Activated CD4-positive, alpha-beta memory T cell treated with anti-CD3 and anti-CD28 coated beads, Interleukin-2, amount 10 ng/mL, durations not matched to agents 7 days and 5 days (primary cell): ENCODE measurements at regions of chr10 and their contacts with region 1.

Region 1: DNA sequence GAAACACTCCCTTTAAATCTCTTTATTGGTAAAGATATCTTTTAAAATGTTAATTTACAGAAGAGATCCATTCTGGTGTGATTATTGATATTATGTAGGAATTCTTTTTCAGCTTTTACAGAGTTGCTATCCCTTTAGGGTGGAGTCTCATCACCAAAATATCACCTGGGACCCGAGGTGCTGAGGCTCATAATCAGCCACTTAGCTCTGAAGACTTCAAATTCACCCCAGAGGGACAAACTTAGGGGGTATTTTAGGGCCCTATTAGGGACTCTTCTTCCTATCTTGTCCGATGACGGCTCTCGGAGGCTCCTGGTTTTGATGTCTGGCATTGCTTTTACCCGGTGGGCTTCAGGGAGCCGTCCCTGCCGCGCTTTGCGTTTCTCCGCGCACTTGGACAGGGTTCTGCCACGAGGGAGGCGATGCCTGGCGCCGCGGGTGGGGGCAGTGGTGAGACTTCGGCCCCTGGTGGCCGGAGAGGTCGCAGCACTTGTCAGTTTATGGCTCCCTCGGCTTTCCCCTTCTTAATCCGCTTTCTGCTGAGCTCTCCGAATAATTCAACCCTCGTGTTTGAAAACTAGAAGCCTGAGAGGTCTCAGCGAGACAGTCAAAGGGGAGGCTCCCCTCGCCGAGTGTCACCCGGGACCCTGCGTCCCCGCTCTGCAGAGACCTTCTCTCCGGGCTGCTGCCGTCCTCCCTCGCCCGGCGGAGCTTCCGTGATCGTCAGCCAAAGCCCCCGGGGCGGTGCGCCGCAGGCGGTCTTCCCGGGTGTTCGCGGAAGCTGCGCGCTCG is 27.8 kb downstream of the RBM20 start:
- DNase-seq: peak; percentile 71
- H3K4me3 Mint-ChIP-seq: peak overlapping the region; percentile 74
- H3K27ac Mint-ChIP-seq: no peak overlapping the region
- H3K4me1 Mint-ChIP-seq: peaks cover 5% of the 10 kb centered on the region
- H3K27me3 Mint-ChIP-seq: peaks cover 25% of the 10 kb centered on the region

Region 2: DNA sequence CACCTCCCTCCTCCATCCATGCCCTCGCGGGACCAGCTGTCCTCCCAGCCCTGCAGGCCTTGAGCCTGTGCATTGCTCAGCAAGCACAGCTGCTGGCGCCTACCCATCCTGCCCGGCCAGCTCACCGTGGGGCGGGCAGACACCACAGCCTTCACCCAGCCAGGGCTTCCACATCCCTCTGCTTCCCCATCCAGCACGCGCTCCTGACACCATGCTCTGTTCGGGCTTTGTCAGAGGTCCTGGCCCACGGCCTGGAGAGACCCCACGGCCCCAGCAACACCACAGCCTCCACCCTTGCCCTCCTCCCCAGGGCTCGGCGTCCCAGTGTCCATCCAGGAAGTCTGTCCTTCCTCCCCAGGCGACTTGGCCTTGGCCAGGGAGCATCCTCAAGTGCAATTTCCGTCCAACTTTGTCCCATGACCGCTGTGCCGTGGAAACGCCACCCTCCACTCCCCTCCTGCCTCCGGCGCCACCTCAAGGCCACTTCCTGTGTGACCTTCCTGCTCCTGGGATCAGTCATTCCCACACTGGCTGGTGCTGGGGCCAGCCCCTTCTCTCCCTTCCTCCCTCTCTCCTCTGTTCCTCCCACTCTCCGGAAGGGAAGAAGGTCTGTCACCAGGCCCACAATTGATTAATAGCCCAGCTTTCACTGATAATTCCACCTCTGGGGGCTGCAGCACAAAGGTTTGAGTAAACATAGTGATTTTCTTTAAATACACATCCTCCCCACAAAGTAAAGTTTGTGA is 295.8 kb before region 1 on chr10:
- CTCF ChIA-PET with region 1: no interaction called
- POLR2A ChIA-PET with region 1: no interaction called
- DNase-seq: no peak
- H3K4me3 Mint-ChIP-seq: no peak overlapping the region
- H3K27ac Mint-ChIP-seq: no peak overlapping the region
- H3K4me1 Mint-ChIP-seq: peaks cover 29% of the 10 kb centered on the region
- H3K27me3 Mint-ChIP-seq: peaks cover 1% of the 10 kb centered on the region

Region 3: GRCh38 chr10:110395725-110396651 is 276.0 kb before region 1 on chr10:
- CTCF ChIA-PET with region 1: no interaction called
- POLR2A ChIA-PET with region 1: no interaction called
- DNase-seq: peak; percentile 63
- H3K4me3 Mint-ChIP-seq: no peak overlapping the region
- H3K27ac Mint-ChIP-seq: peak overlapping the region; percentile 52
- H3K4me1 Mint-ChIP-seq: peaks cover 59% of the 10 kb centered on the region
- H3K27me3 Mint-ChIP-seq: no peaks in the 10 kb centered on the region

Region 4: DNA sequence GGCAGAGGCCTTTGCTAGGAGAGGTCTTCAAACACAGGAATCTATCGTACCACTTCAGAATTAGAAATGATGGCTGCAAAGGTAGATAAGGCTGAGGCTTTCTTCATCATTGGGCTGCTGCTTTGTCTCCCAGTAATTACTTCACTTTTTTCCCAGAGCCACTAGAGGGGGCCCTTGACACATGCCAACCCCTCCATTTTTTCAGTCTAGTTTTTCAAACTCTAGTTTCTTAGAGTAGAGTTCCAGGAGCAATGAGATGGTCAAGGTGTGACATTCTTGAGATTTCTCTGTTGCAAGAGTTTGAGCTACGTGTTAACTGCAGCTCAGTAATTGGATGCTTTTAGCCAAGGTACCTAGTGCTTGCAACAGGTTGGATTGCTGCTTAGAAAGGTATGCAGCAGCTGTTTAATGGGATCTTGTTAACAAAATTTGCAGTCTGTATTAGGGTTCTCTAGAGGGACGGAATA is 61.6 kb before region 1 on chr10:
- CTCF ChIA-PET with region 1: interaction called, 19 read pairs
- POLR2A ChIA-PET with region 1: interaction called, 3 read pairs
- DNase-seq: peak; percentile 57
- H3K4me3 Mint-ChIP-seq: no peak overlapping the region
- H3K27ac Mint-ChIP-seq: no peak overlapping the region
- H3K4me1 Mint-ChIP-seq: peaks cover 30% of the 10 kb centered on the region
- H3K27me3 Mint-ChIP-seq: no peaks in the 10 kb centered on the region

Region 5: GRCh38 chr10:110648692-110649346 is 23.2 kb before region 1 on chr10:
- CTCF ChIA-PET with region 1: interaction called, 11 read pairs
- POLR2A ChIA-PET with region 1: interaction called, 4 read pairs
- DNase-seq: no peak
- H3K4me3 Mint-ChIP-seq: no peak overlapping the region
- H3K27ac Mint-ChIP-seq: no peak overlapping the region
- H3K4me1 Mint-ChIP-seq: peaks cover 24% of the 10 kb centered on the region
- H3K27me3 Mint-ChIP-seq: peaks cover 67% of the 10 kb centered on the region

Region 6: GRCh38 chr10:110686949-110687348 is 15.0 kb after region 1 on chr10:
- CTCF ChIA-PET with region 1: interaction called, 31 read pairs
- POLR2A ChIA-PET with region 1: interaction called, 4 read pairs
- DNase-seq: no peak
- H3K4me3 Mint-ChIP-seq: no peak overlapping the region
- H3K27ac Mint-ChIP-seq: no peak overlapping the region
- H3K4me1 Mint-ChIP-seq: no peaks in the 10 kb centered on the region
- H3K27me3 Mint-ChIP-seq: peaks cover 31% of the 10 kb centered on the region

Region 7: DNA sequence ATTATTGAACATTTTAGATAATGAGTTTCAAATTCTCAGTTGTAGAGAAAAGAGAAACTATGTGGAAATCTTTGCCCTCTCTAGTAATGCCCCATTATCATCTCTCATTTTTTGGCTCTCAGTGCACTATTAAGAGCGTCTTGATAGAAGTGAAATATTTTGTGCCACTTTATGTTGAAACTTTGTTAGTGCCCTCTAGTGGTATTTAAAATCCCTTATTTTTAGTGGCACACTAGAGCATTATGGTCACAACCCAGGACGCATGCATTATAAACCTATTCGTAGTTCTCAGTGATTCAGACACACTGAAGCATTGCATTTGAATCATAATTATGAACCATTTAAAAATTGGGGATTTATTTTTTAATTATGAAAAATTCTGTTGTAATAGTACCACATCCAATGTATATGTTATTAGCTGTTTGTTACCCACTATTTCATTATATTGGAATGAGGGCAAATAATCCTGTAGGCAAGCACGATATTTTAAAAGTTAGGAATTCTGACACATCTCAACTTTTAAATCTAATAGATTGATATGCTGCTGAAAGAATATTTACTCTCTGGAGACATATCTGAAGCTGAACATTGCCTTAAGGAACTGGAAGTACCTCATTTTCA is 221.7 kb after region 1 on chr10:
- CTCF ChIA-PET with region 1: interaction called, 11 read pairs
- POLR2A ChIA-PET with region 1: no interaction called
- DNase-seq: no peak
- H3K4me3 Mint-ChIP-seq: no peak overlapping the region
- H3K27ac Mint-ChIP-seq: no peak overlapping the region
- H3K4me1 Mint-ChIP-seq: peaks cover 5% of the 10 kb centered on the region
- H3K27me3 Mint-ChIP-seq: no peaks in the 10 kb centered on the region